ENCODE measurements at regions of chr4 and their contacts with region 1.

Region 1: DNA sequence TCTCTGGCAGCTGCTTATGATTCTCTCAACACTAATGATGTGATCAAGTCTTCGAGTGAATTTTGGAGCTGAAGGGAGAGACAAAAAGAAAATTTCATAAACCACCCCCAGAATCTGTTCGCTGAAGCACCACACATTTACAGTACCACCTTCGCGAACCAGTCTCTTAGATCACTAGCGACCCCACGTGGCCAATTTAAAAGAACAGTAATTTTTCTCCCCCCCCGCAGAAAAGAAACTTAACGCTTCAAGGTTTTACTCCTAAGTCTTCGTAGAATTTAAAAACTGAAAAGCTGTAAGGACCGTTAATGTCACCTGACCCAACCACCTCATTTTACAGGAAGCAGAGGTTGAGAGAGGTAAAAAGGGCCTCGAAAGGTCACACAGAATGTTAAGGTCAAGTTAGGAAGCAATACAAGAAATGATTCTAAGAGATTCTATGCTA is 187.5 kb downstream of the QDPR start:
- DNase-seq: peak; percentile 72
- H3K4me3 ChIP-seq: no peak overlapping the region
- H3K27ac ChIP-seq: no peak overlapping the region
- H3K4me1 ChIP-seq: peaks cover 22% of the 10 kb centered on the region
- H3K27me3 ChIP-seq: no peaks in the 10 kb centered on the region
- CTCF ChIP-seq: peak; percentile 50 to 53
- POLR2A ChIP-seq: no peak

Region 2: DNA sequence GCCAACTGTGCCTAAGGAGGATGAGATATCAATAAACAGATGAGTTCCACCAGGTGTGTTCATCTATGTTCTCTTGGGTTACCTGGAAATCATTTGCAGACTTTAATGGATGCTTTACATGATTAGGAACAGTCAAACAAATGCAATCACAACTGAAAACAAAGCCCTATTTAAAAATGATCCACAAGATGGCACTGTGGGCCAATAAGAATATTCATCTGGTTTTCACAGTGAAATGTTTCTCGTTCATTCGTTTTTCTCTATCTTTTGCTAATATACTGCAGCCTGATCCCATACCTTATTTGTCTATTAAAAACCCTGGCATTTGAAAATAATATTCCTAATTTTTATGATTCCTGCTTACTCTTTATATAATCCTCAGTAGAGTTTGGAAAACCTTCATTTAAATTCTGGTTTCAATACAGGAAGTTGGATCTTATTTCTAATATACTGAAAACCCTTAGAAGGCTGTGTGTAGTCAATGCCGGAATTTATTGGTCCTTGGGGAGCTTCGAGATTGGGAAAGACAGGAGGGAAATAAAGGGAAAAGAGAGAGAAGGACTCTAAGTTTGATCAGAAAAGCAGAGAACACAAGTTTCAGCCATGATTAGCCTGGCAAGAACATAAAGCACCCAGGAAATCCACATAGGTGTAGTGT is 1034.4 kb before region 1 on chr4:
- CTCF ChIA-PET with region 1: interaction called, 20 read pairs
- POLR2A ChIA-PET with region 1: no interaction called
- dilution Hi-C with region 1: no loop called
- intact Hi-C with region 1: loop called (anchors 1 kb)
- DNase-seq: peak; percentile 69
- H3K4me3 ChIP-seq: no peak overlapping the region
- H3K27ac ChIP-seq: no peak overlapping the region
- H3K4me1 ChIP-seq: no peaks in the 10 kb centered on the region
- H3K27me3 ChIP-seq: peaks cover 12 to 18% of the 10 kb centered on the region in 2 experiments
- CTCF ChIP-seq: peak; percentile 27 to 41
- POLR2A ChIP-seq: no peak

Region 3: DNA sequence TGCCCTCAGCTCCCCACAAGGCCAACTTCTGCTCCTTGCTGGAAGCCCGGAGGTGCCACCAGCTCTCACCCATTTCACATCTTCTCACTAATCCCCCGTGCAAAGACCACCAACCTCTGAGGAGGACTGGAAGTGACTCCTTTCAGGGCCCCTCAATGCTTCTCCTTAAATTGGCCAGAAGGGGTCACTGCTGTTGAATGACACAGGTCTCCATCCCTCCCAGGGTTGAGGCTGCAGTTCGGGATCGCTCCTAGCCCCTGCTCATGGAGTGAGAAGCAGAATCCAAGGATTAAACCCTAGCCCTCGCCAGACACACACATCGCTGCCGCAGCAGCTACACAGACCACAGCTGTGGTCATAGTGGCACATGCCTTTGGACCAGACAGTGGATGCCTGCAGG is 818.7 kb before region 1 on chr4:
- CTCF ChIA-PET with region 1: interaction called, 3 read pairs
- POLR2A ChIA-PET with region 1: no interaction called
- dilution Hi-C with region 1: no loop called
- intact Hi-C with region 1: loop called (anchors 5 kb)
- DNase-seq: no peak
- H3K4me3 ChIP-seq: no peak overlapping the region
- H3K27ac ChIP-seq: no peak overlapping the region
- H3K4me1 ChIP-seq: no peaks in the 10 kb centered on the region
- H3K27me3 ChIP-seq: no peaks in the 10 kb centered on the region
- CTCF ChIP-seq: peak; percentile 16 to 39
- POLR2A ChIP-seq: no peak

Region 4: GRCh38 chr4:16794816-16795445 is 529.5 kb before region 1 on chr4:
- CTCF ChIA-PET with region 1: interaction called, 31 read pairs
- POLR2A ChIA-PET with region 1: no interaction called
- dilution Hi-C with region 1: no loop called
- intact Hi-C with region 1: loop called (anchors 1 kb)
- DNase-seq: peak; percentile 83
- H3K4me3 ChIP-seq: no peak overlapping the region
- H3K27ac ChIP-seq: no peak overlapping the region
- H3K4me1 ChIP-seq: peaks cover 19% of the 10 kb centered on the region
- H3K27me3 ChIP-seq: no peaks in the 10 kb centered on the region
- CTCF ChIP-seq: peak; percentile 90 to 91
- POLR2A ChIP-seq: no peak

Region 5: DNA sequence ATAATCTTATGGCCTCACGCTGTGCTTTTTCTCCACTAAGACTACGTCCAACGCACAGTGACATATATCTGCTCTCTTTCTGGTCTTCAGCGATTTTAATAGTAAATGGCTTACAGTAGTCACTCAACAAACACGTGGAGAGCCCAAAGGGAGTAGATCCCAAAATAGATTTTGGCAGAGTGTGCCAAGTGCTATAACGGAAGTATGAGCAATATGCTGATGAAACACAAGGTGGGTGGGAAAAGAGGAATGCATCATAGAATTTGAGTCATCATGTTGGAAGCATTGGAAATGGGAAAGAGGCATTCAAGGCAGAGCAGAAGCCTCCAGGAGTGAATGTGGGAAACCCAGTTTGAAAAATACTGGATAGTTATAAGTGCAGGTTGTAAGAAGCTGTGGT is 296.9 kb before region 1 on chr4:
- CTCF ChIA-PET with region 1: interaction called, 3 read pairs
- POLR2A ChIA-PET with region 1: no interaction called
- dilution Hi-C with region 1: no loop called
- intact Hi-C with region 1: loop called (anchors 1 kb)
- DNase-seq: peak; percentile 87
- H3K4me3 ChIP-seq: no peak overlapping the region
- H3K27ac ChIP-seq: peak overlapping the region; percentile 48
- H3K4me1 ChIP-seq: peaks cover 33% of the 10 kb centered on the region
- H3K27me3 ChIP-seq: no peaks in the 10 kb centered on the region
- CTCF ChIP-seq: no peak
- POLR2A ChIP-seq: no peak

Region 6: GRCh38 chr4:17347445-17347844 is 23.0 kb after region 1 on chr4:
- CTCF ChIA-PET with region 1: interaction called, 11 read pairs
- POLR2A ChIA-PET with region 1: no interaction called
- dilution Hi-C with region 1: no loop called
- intact Hi-C with region 1: no loop called
- DNase-seq: peak; percentile 40
- H3K4me3 ChIP-seq: no peak overlapping the region
- H3K27ac ChIP-seq: no peak overlapping the region
- H3K4me1 ChIP-seq: no peaks in the 10 kb centered on the region
- H3K27me3 ChIP-seq: no peaks in the 10 kb centered on the region
- CTCF ChIP-seq: peak; percentile 44 to 57
- POLR2A ChIP-seq: no peak